ENCODE measurements at regions of chr13 and their contacts with region 1.

Region 1: GRCh38 chr13:20924758-20925394 is 22.3 kb upstream of the XPO4 start:
- DNase-seq: peak in 1 of 2 donors; percentile 86
- H3K4me3 ChIP-seq: no peak overlapping the region
- H3K27ac ChIP-seq: no peak overlapping the region
- H3K4me1 ChIP-seq: no peaks in the 10 kb centered on the region
- H3K27me3 ChIP-seq: no peaks in the 10 kb centered on the region
- CTCF ChIP-seq: peak; percentile 45 to 77 (median 68)

Region 2: DNA sequence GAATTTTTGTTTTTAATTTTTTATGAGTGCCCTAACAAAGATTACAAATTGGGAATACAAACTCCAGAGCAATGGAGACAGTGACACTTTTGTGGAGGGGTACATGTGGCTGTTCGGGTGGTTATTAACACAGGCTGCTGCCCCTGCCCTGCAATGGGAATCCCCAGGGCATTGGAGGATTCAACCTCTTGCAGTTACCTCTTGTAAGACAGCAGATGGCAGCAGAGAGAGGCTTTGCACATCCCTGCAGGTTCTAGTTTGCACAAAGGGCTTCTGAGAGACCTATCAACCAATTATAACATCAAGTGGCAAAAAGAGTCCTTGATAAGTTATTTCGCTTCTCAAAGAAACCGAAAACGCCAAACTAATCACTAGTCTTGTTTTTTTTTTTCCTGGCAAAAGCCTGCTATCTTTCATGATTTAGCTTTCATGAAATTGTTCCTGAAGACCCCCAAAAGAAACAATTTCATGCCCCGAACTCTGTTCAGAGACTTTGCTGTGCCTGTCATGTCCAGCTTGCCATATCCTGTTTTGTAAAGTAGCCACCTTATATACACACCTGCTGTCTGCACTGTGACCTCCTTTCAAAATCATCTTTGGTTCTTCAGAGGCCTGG is 742.5 kb before region 1 on chr13:
- intact Hi-C with region 1: loop called (anchors 10 kb)
- DNase-seq: no peak
- H3K4me3 ChIP-seq: no peak overlapping the region
- H3K27ac ChIP-seq: no peak overlapping the region
- H3K4me1 ChIP-seq: no peaks in the 10 kb centered on the region
- H3K27me3 ChIP-seq: peaks cover 3% of the 10 kb centered on the region
- CTCF ChIP-seq: peak; percentile 35 to 74 (median 62)

Region 3: DNA sequence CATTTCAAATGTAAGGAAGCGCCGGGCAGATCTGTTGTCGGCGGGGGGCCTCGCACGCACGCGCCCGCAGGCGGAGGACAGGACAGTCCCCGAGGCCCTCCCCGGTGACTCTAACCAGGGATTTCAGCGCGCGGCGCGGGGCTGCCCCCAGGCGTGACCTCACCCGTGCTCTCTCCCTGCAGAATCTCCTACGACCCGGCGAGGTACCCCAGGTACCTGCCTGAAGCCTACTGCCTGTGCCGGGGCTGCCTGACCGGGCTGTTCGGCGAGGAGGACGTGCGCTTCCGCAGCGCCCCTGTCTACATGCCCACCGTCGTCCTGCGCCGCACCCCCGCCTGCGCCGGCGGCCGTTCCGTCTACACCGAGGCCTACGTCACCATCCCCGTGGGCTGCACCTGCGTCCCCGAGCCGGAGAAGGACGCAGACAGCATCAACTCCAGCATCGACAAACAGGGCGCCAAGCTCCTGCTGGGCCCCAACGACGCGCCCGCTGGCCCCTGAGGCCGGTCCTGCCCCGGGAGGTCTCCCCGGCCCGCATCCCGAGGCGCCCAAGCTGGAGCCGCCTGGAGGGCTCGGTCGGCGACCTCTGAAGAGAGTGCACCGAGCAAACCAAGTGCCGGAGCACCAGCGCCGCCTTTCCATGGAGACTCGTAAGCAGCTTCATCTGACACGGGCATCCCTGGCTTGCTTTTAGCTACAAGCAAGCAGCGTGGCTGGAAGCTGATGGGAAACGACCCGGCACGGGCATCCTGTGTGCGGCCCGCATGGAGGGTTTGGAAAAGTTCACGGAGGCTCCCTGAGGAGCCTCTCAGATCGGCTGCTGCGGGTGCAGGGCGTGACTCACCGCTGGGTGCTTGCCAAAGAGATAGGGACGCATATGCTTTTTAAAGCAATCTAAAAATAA is 203.2 kb before region 1 on chr13:
- intact Hi-C with region 1: no loop called
- DNase-seq: no peak
- H3K4me3 ChIP-seq: peak overlapping the region; percentile 27 to 61
- H3K27ac ChIP-seq: no peak overlapping the region
- H3K4me1 ChIP-seq: peaks cover 0 to 10% of the 10 kb centered on the region in 2 donors
- H3K27me3 ChIP-seq: no peaks in the 10 kb centered on the region
- CTCF ChIP-seq: no peak